ENCODE measurements at regions of chr19 and their contacts with region 1.

Region 1: GRCh38 chr19:14689598-14690503 is at the start of gene ZNF333:
- DNase-seq: peak; percentile 68
- ATAC-seq: peak; percentile 98
- H3K4me3 ChIP-seq: peak within 1 kb of the TSS; percentile 96
- H3K27ac ChIP-seq: peak within 1 kb of the TSS; percentile 95
- H3K4me1 ChIP-seq: peaks cover 8% of the 10 kb centered on the region
- H3K27me3 ChIP-seq: no peaks in the 10 kb centered on the region
- CTCF ChIP-seq: no peak
- EP300 ChIP-seq: peak in 1 of 2 experiments; percentile 27; a peak in 1 of 4 replicates
- POLR2A ChIP-seq: peak; percentile 91
- RAD21 ChIP-seq: no peak
- polyA plus RNA-seq, gene ZNF333: 2.3 to 2.9 TPM

Region 2: DNA sequence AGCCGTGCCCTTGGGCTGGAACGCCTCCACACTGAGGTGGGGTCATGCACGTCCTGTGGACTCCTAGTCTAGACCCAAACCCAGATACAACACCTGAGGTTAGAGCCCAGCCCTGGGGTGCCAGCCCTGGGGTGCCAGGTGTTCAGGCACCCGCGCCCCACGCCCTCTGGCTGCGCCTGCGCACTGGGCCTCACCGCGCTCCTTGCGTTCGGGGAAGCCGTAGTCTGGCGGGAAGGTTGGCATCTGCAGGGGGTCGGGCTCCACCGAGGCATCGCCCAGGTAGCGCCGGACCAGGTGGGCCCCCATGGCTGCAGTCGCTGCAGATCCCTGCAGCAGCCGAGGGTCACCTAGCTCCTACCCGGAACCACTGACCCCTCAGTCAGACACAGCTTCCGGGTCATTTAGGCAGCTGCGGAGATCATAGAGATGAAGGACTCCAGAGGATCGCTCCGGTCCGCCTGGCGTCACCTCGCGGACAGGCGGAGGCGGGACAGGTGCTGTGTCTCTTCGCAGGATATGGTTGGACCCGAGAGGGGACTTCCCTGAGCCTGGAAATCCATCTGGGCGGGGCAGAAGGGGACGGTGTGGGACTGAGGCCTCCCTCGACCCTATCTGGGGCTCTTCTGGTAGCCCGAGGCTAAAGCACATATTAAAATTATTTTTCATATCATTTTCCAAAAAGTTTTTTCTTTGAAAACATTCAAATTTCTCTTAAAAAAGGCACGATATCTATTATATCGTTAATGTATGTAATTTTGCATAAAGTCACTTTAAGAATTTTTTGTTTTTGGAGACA is 118.0 kb before region 1 on chr19 and contains the start of gene NDUFB7:
- CTCF ChIA-PET with region 1: interaction called, 803 read pairs
- POLR2A ChIA-PET with region 1: interaction called, 190 read pairs
- RAD21 ChIA-PET with region 1: interaction called, 593 read pairs
- SMC1A ChIA-PET with region 1: interaction called, 558 read pairs
- in situ Hi-C with region 1: loop called (anchors 5 kb)
- intact Hi-C with region 1: loop called (anchors 1 kb)
- DNase-seq: peak; percentile 90
- ATAC-seq: peak; percentile 96
- H3K4me3 ChIP-seq: peak within 1 kb of the TSS; percentile 99
- H3K27ac ChIP-seq: peak within 1 kb of the TSS; percentile 93
- H3K4me1 ChIP-seq: peaks cover 12% of the 10 kb centered on the region
- H3K27me3 ChIP-seq: no peaks in the 10 kb centered on the region
- CTCF ChIP-seq: peak; percentile 93 to 99 (median 95)
- EP300 ChIP-seq: no peak
- POLR2A ChIP-seq: peak; percentile 95
- RAD21 ChIP-seq: no peak
- polyA plus RNA-seq, gene NDUFB7: 14.6 to 72.4 TPM

Region 3: DNA sequence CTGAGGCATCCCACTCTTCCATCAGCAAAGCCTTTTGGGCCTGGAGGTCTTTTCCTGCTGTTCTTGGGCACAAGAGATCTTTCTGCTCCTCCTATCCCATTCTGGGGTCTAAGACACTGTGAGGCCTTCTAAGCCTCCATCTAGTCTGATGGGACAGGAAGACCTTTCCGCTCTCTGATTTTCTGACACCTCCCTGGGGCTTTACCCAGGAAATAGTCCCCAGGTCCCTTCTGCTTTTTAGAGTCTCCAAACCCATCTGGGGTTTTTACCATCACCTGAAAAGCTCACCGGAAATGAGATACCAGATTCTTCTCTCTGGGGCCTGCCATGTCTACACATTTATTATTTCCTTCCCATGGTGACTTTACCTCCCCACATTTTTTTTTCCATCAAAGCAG is 85.9 kb before region 1 on chr19:
- CTCF ChIA-PET with region 1: interaction called, 39 read pairs
- POLR2A ChIA-PET with region 1: interaction called, 5 read pairs
- RAD21 ChIA-PET with region 1: interaction called, 38 read pairs
- SMC1A ChIA-PET with region 1: interaction called, 63 read pairs
- in situ Hi-C with region 1: no loop called
- intact Hi-C with region 1: no loop called
- DNase-seq: peak; percentile 84
- ATAC-seq: peak; percentile 97
- H3K4me3 ChIP-seq: 0 out of 2 replicates have a peak overlapping the region, but pooled peaks have one; percentile 17
- H3K27ac ChIP-seq: peak overlapping the region; percentile 89
- H3K4me1 ChIP-seq: peaks cover 36% of the 10 kb centered on the region
- H3K27me3 ChIP-seq: no peaks in the 10 kb centered on the region
- CTCF ChIP-seq: no peak
- EP300 ChIP-seq: peak in 1 of 2 experiments; percentile 53; a peak in 1 of 4 replicates
- POLR2A ChIP-seq: peak; percentile 38; the same call in 1 of the 2 replicates
- RAD21 ChIP-seq: no peak

Region 4: DNA sequence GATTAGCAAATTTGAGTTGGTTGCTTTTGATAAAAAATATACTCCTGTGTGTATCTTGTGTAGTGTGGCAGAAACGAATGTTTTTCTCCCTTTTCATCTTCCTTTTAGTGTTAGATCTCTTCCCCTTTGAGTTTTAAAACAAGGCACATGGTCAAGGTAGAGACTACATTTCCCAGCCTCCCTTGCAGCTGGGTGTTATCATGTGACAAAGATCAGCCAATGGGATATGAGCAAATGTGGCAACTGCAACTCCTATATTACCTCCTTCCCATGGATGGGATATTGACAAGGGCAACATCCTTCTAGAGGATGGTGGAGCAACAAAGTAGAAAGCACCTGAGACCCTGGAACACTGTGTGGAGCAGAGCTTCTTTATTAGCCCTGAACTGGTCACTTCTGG is 57.6 kb before region 1 on chr19:
- CTCF ChIA-PET with region 1: interaction called, 6 read pairs
- POLR2A ChIA-PET with region 1: no interaction called
- RAD21 ChIA-PET with region 1: interaction called, 14 read pairs
- SMC1A ChIA-PET with region 1: interaction called, 5 read pairs
- in situ Hi-C with region 1: no loop called
- intact Hi-C with region 1: no loop called
- DNase-seq: peak; percentile 40
- ATAC-seq: peak; percentile 75
- H3K4me3 ChIP-seq: no peak overlapping the region
- H3K27ac ChIP-seq: no peak overlapping the region
- H3K4me1 ChIP-seq: no peaks in the 10 kb centered on the region
- H3K27me3 ChIP-seq: no peaks in the 10 kb centered on the region
- CTCF ChIP-seq: no peak
- EP300 ChIP-seq: no peak
- POLR2A ChIP-seq: no peak
- RAD21 ChIP-seq: no peak

Region 5: DNA sequence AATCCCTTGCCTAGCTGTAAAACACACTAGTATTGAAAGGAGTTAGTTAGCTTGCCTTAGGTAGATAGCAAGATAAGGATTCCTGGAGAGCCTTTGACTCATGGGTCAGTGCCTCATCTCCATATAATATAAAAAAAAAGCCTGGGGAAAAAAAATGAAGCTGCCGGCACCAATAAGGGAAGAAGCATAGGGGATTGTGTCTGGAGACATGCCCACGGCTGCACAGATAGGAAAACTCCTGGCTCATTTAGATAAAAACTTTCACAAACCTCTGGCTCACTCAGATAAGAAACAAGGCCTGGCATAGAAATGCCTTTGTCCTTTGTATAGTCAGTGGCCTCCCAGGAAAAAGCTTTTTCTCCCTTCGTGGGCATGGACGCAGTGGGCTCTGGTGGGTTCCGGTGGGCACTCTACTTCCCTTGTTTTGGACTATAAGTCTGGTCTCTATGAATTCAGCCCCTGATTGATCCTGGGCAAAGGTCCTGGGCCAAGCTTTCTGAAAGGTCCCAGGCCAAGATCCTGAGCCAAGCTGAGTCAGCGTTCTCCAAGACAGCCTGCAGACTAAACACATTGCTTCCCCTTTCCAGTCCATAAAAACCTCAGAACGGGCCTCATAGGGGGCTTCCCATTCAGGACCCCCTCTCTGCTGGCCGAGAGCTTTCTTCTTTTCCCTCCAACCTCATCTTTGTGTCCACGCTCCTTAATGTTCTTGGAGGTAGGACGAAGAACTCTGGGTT is 201.0 kb after region 1 on chr19:
- CTCF ChIA-PET with region 1: interaction called, 4 read pairs
- POLR2A ChIA-PET with region 1: no interaction called
- RAD21 ChIA-PET with region 1: no interaction called
- SMC1A ChIA-PET with region 1: no interaction called
- in situ Hi-C with region 1: no loop called
- intact Hi-C with region 1: loop called (anchors 2 kb)
- DNase-seq: no peak
- ATAC-seq: no peak
- H3K4me3 ChIP-seq: no peak overlapping the region
- H3K27ac ChIP-seq: no peak overlapping the region
- H3K4me1 ChIP-seq: no peaks in the 10 kb centered on the region
- H3K27me3 ChIP-seq: no peaks in the 10 kb centered on the region; a peak in 1 of 4 replicates
- CTCF ChIP-seq: no peak
- EP300 ChIP-seq: no peak
- POLR2A ChIP-seq: no peak
- RAD21 ChIP-seq: no peak